ENCODE measurements at regions of chr1 and their contacts with region 1.

Region 1: GRCh38 chr1:240732390-240732789 is 120.4 kb upstream of the GREM2 start:
- ATAC-seq: peak; percentile 65 to 91 (median 88)
- H3K4me3 ChIP-seq: no peak overlapping the region
- H3K27ac ChIP-seq: no peak overlapping the region
- H3K4me1 ChIP-seq: no peaks in the 10 kb centered on the region

Region 2: DNA sequence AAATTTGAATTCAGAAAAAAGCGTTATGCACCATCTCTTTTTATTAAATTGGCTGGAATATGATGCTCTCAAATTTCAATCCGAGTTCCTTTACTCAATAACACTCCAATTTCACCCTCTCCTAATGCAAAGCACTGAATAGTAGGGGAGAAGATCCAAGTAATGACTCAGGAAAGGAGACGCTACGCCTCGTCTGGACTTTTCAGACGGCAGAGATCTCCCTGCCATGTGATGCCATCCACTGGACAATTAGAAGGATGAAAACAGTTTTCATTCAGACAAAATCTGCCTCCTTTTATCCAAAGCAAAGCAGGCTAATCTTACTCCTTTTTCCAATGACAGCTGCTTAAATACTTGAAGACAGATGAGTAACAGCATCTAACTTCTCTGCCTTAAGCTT is 122.0 kb after region 1 on chr1:
- in situ Hi-C with region 1: loop called in 1 of 9 experiments (anchors 25 kb)
- ATAC-seq: peak in 3 of 8 experiments; percentile 25 to 95 (median 45)
- H3K4me3 ChIP-seq: no peak overlapping the region
- H3K27ac ChIP-seq: no peak overlapping the region
- H3K4me1 ChIP-seq: no peaks in the 10 kb centered on the region

Region 3: GRCh38 chr1:240946926-240947325 is 214.5 kb after region 1 on chr1:
- in situ Hi-C with region 1: loop called in 1 of 9 experiments (anchors 25 kb)
- ATAC-seq: peak in 3 of 8 experiments; percentile 44 to 57 (median 53)
- H3K4me3 ChIP-seq: no peak overlapping the region
- H3K27ac ChIP-seq: no peak overlapping the region
- H3K4me1 ChIP-seq: peaks cover 1 to 2% of the 10 kb centered on the region in 2 donors

Region 4: DNA sequence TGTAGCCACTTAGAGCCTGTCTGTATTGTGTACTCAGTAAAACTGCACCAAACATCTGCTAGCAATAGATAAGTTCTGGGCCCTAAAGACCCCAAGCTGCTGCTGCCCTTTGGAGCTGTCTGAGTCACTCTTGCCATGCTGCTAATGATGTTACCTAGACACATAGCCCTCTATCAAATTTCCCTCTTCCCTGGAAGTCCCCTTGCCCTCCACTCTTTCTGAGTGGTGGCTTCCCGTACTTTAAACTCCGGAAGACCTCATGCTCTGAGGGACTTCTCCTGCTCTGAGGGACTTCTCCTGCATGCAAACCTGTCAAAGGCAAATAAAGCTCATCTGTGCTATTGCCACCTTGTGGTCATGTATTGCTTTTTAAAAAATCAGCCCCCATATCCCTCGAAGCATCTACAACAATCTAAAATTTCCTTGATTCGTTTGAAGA is 753.2 kb after region 1 on chr1:
- in situ Hi-C with region 1: loop called in 5 of 9 experiments (anchors 25 kb)
- ATAC-seq: peak in 1 of 8 experiments; percentile 35
- H3K4me3 ChIP-seq: no peak overlapping the region
- H3K27ac ChIP-seq: no peak overlapping the region
- H3K4me1 ChIP-seq: no peaks in the 10 kb centered on the region

Region 5: DNA sequence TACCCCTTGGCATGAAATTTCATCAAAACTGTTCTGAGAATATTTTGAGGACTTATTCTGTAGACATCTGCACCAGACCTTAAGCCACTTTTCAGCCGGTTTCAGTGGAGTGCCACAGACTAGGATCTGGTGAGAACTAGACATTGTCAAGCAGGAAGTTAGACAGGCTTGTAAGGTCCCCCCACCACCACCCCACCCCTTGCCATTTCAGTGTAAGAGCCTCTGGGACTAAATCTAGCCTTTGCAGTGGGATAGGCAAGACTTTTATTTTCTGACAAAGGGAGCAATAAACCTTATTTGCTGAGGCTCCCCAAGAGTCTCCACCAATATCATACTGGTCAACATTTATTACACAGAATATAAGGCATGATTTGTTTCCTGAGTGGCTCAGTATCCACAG is 1037.7 kb after region 1 on chr1:
- in situ Hi-C with region 1: no loop called
- ATAC-seq: peak in 5 of 8 experiments; percentile 44 to 95 (median 74)
- H3K4me3 ChIP-seq: no peak overlapping the region
- H3K27ac ChIP-seq: no peak overlapping the region
- H3K4me1 ChIP-seq: peaks cover 0 to 6% of the 10 kb centered on the region in 2 donors

Measured in motor neuron (in vitro differentiated cells).